CD4-positive, alpha-beta memory T cell (primary cell): ENCODE measurements at regions of chr2 and their contacts with region 1.

Region 1: GRCh38 chr2:230798769-230799399 is 65.9 kb upstream of the ITM2C start:
- DNase-seq: peak; percentile 57 to 71 (median 64)
- H3K4me3 ChIP-seq: no peak overlapping the region
- H3K4me3 Mint-ChIP-seq: peak overlapping the region in 1 of 8 donors; percentile 47
- H3K27ac ChIP-seq: peak overlapping the region; percentile 8
- H3K27ac Mint-ChIP-seq: peak overlapping the region in 3 of 7 donors; percentile 7 to 62 (median 43)
- H3K4me1 ChIP-seq: peaks cover 53% of the 10 kb centered on the region
- H3K4me1 Mint-ChIP-seq: peaks cover 20 to 26% (median 23%) of the 10 kb centered on the region in 4 donors
- H3K27me3 ChIP-seq: no peaks in the 10 kb centered on the region
- H3K27me3 Mint-ChIP-seq: no peaks in the 10 kb centered on the region

Region 2: DNA sequence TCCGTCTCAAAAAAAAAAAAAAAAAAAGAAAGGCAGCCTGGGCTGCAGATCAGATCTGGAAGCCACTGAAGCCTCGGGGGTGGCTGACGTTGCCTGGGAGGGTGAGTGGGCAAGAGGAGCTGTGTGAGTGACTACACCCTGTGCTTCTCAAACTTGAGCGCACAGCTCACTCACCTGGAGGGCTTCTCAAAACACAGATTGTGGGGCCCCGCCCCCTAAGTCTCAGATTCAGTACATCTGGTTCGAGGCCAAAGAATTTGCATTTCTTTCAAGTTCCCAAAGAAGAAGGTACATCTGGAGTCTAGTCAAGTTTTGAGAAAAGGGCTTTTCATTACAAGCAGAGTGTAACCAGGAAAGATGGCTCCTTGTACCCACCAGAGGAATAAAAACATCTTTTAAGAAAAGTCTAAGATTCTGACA is 184.0 kb before region 1 on chr2:
- CTCF ChIA-PET with region 1: interaction called, 7 read pairs
- POLR2A ChIA-PET with region 1: no interaction called
- intact Hi-C with region 1: loop called (anchors 5 kb)
- DNase-seq: no peak
- H3K4me3 ChIP-seq: no peak overlapping the region
- H3K4me3 Mint-ChIP-seq: no peak overlapping the region
- H3K27ac ChIP-seq: no peak overlapping the region
- H3K27ac Mint-ChIP-seq: no peak overlapping the region
- H3K4me1 ChIP-seq: peaks cover 25% of the 10 kb centered on the region
- H3K4me1 Mint-ChIP-seq: peaks cover 9 to 19% (median 16%) of the 10 kb centered on the region in 4 donors
- H3K27me3 ChIP-seq: no peaks in the 10 kb centered on the region
- H3K27me3 Mint-ChIP-seq: no peaks in the 10 kb centered on the region

Region 3: DNA sequence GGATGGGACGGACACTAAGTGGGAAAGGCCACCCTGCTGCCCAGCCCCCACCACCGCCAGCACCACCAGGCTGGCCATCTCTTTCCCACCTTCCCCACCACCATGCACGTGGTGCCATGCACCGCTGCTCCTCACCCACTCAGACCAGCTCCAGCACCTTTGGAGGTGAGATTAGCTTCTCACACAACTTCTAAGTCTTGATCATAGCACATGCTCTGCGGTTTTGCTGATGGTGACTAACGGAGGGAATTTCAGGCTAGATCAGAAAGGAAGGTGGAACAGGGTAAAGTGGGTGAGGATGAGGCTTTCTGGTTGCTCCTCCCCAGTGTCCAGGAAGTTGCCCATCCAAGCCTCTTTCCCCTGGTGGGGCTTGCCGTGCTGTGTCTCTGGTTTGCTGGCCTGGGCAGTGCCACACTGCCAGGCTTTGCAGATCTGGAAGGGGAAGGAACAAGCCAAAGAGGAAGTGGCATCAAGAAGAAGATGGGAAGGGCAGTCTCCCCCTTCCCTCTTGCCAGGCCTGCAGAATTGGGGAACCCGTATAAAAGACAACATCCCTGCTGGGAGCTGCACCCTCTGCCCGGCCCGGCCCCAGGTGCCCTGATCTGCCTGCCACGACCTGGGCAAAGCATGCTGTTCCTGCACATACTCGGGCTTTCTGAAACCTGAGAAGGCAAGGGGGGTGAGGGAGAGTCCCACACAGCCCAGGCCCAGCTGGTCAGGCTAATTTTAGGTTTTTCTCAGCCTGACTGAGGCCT is 130.5 kb before region 1 on chr2:
- CTCF ChIA-PET with region 1: interaction called, 14 read pairs
- POLR2A ChIA-PET with region 1: interaction called, 4 read pairs
- intact Hi-C with region 1: no loop called
- DNase-seq: peak in 1 of 5 donors; percentile 71
- H3K4me3 ChIP-seq: no peak overlapping the region
- H3K4me3 Mint-ChIP-seq: peak overlapping the region in 6 of 8 donors; percentile 25 to 75 (median 43)
- H3K27ac ChIP-seq: no peak overlapping the region
- H3K27ac Mint-ChIP-seq: peak overlapping the region; percentile 33 to 86 (median 72)
- H3K4me1 ChIP-seq: peaks cover 60% of the 10 kb centered on the region
- H3K4me1 Mint-ChIP-seq: peaks cover 46 to 71% (median 62%) of the 10 kb centered on the region in 4 donors
- H3K27me3 ChIP-seq: no peaks in the 10 kb centered on the region
- H3K27me3 Mint-ChIP-seq: no peaks in the 10 kb centered on the region

Region 4: DNA sequence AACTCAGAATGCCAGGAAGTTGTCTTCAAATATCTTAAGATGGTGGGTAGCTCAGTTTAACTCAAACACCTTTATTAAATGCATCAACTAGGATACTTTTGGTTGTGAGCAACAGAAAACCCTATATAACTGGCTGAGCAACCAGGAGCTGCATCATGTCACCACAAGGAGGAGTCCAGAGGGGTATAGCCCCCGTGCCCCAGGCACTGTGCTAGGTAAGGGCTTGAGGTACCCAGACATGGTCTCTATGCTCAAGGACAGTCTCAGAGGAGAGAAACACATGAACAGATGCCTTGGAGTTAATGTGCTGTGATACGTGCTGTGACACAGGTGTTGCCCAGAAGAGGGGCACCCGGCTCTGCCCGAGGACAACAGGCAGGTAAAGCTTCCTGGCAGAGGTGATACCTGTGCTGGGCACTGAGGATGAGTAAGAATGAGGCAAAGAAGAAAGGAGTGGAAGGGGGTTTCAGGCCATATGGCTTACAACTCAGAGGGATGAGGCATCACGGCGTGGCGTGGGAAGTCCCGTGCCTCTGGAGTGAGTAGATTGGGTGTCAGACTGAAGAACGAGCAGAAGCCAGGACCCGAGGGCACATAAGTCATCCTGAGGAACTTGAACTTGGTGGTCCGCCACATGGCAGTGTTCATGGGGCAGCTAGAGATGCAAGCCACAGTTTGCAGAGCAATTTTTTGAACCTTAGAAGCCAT is 118.3 kb before region 1 on chr2:
- CTCF ChIA-PET with region 1: interaction called, 10 read pairs
- POLR2A ChIA-PET with region 1: no interaction called
- intact Hi-C with region 1: no loop called
- DNase-seq: no peak
- H3K4me3 ChIP-seq: no peak overlapping the region
- H3K4me3 Mint-ChIP-seq: no peak overlapping the region
- H3K27ac ChIP-seq: no peak overlapping the region
- H3K27ac Mint-ChIP-seq: peak overlapping the region in 1 of 7 donors; percentile 10
- H3K4me1 ChIP-seq: peaks cover 12% of the 10 kb centered on the region
- H3K4me1 Mint-ChIP-seq: peaks cover 12 to 36% (median 20%) of the 10 kb centered on the region in 4 donors
- H3K27me3 ChIP-seq: no peaks in the 10 kb centered on the region
- H3K27me3 Mint-ChIP-seq: no peaks in the 10 kb centered on the region

Region 5: GRCh38 chr2:230721712-230722111 is 77.2 kb before region 1 on chr2:
- CTCF ChIA-PET with region 1: interaction called, 28 read pairs
- POLR2A ChIA-PET with region 1: interaction called, 8 read pairs
- intact Hi-C with region 1: loop called (anchors 2 kb)
- DNase-seq: peak in 4 of 5 donors; percentile 14 to 38 (median 23)
- H3K4me3 ChIP-seq: no peak overlapping the region
- H3K4me3 Mint-ChIP-seq: peak overlapping the region; percentile 49 to 80 (median 63)
- H3K27ac ChIP-seq: peak overlapping the region; percentile 34
- H3K27ac Mint-ChIP-seq: peak overlapping the region; percentile 14 to 86 (median 78)
- H3K4me1 ChIP-seq: peaks cover 98% of the 10 kb centered on the region
- H3K4me1 Mint-ChIP-seq: peaks cover 64 to 92% (median 80%) of the 10 kb centered on the region in 4 donors
- H3K27me3 ChIP-seq: no peaks in the 10 kb centered on the region
- H3K27me3 Mint-ChIP-seq: no peaks in the 10 kb centered on the region

Region 6: DNA sequence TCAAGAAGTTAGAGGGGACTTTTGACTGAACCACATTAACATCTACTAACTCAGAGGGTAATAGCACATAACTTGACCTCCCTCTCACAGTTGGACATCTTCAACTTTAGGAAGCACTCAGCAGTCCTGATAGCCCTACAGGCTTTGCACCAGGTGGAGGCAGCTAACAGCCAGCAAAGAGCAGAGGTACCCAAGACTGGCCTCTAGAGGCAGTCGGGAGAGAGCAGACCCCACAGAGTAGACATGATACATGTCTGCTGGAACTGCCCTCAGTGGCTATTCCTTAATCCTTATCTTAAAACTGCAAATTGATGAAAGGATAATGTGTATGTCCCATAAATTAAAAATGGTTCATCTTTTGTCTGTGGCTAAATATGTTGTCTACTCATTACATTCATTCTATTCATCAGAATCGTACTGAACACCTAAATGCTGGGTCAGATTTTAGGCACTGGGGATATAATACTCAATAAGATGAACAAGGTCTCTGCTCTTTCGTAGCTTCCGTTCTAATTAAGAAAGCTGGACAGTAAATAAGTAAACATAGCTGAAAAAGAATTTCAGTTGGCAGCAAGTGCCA is 36.5 kb before region 1 on chr2:
- CTCF ChIA-PET with region 1: interaction called, 22 read pairs
- POLR2A ChIA-PET with region 1: no interaction called
- intact Hi-C with region 1: loop called (anchors 2 kb)
- DNase-seq: peak in 2 of 5 donors; percentile 19 to 26
- H3K4me3 ChIP-seq: no peak overlapping the region
- H3K4me3 Mint-ChIP-seq: peak overlapping the region in 1 of 8 donors; percentile 26
- H3K27ac ChIP-seq: no peak overlapping the region
- H3K27ac Mint-ChIP-seq: peak overlapping the region in 4 of 7 donors; percentile 0 to 62 (median 28)
- H3K4me1 ChIP-seq: peaks cover 43% of the 10 kb centered on the region
- H3K4me1 Mint-ChIP-seq: peaks cover 47 to 65% (median 55%) of the 10 kb centered on the region in 4 donors
- H3K27me3 ChIP-seq: no peaks in the 10 kb centered on the region
- H3K27me3 Mint-ChIP-seq: no peaks in the 10 kb centered on the region

Region 7: DNA sequence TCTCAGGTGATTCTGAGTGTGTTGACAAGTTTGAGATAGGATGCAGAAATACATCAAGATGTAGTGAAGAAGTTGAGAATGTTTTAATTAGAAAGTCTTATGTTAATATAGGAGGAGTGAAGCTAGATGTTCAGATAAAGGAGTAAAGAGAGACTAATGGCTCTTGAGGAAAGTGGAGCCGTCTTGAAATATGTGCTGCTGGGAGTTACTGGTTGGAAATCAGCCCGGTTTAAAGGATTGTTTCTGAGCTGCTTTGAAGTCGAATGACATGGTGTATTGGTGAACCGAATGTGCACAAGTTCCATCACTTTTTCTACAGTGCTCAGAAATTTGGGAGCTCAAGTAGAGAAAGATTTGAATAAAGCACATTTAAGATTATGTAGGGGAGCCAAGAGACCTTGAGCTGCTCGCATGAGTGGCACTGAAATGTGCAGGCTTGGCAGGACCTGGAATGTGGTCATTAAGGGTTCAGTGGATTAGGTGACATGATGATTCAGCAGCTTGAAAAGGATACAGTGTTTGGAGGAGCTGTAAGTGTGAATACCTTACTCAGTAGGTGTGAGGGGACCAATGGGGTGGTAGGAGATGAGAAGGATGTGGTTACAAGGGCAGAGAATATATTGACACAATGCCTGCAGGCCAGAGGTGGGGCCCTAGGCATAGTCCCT is 17.6 kb before region 1 on chr2:
- CTCF ChIA-PET with region 1: interaction called, 45 read pairs
- POLR2A ChIA-PET with region 1: interaction called, 142 read pairs
- intact Hi-C with region 1: loop called (anchors 1 kb)
- DNase-seq: peak; percentile 59 to 83 (median 64)
- H3K4me3 ChIP-seq: no peak overlapping the region
- H3K4me3 Mint-ChIP-seq: peak overlapping the region in 6 of 8 donors; percentile 13 to 60 (median 34)
- H3K27ac ChIP-seq: peak overlapping the region; percentile 33
- H3K27ac Mint-ChIP-seq: peak overlapping the region; percentile 14 to 93 (median 64)
- H3K4me1 ChIP-seq: peaks cover 78% of the 10 kb centered on the region
- H3K4me1 Mint-ChIP-seq: peaks cover 60 to 81% (median 72%) of the 10 kb centered on the region in 4 donors
- H3K27me3 ChIP-seq: no peaks in the 10 kb centered on the region
- H3K27me3 Mint-ChIP-seq: no peaks in the 10 kb centered on the region

Region 8: GRCh38 chr2:230840301-230840700 is 41.4 kb after region 1 on chr2:
- CTCF ChIA-PET with region 1: no interaction called
- POLR2A ChIA-PET with region 1: no interaction called
- intact Hi-C with region 1: no loop called
- DNase-seq: no peak
- H3K4me3 ChIP-seq: no peak overlapping the region
- H3K4me3 Mint-ChIP-seq: no peak overlapping the region
- H3K27ac ChIP-seq: no peak overlapping the region
- H3K27ac Mint-ChIP-seq: no peak overlapping the region
- H3K4me1 ChIP-seq: no peaks in the 10 kb centered on the region
- H3K4me1 Mint-ChIP-seq: no peaks in the 10 kb centered on the region
- H3K27me3 ChIP-seq: no peaks in the 10 kb centered on the region
- H3K27me3 Mint-ChIP-seq: peaks cover 3 to 12% of the 10 kb centered on the region in 2 donors

Region 9: DNA sequence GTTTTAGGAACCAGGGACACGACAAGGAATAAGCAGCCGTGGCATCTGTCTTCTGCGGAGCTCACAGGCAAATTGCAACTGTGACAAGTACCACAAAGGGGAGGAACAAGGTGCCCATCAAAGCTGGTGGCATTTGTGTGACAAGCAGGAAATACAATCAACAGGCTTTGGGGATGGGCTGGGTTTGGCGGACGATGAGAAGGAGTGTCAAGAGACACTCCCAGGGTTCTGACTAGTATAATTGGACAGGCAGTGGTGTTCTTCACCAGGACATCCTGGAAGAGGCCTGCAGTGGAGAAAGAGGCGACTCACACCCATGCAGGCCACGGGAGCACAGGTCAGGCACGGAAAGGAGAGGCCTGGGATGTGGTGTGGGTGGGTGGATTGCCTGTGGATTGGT is 182.8 kb after region 1 on chr2:
- CTCF ChIA-PET with region 1: no interaction called
- POLR2A ChIA-PET with region 1: no interaction called
- intact Hi-C with region 1: no loop called
- DNase-seq: peak in 4 of 5 donors; percentile 39 to 53 (median 48)
- H3K4me3 ChIP-seq: no peak overlapping the region
- H3K4me3 Mint-ChIP-seq: peak overlapping the region; percentile 62 to 79 (median 66)
- H3K27ac ChIP-seq: no peak overlapping the region
- H3K27ac Mint-ChIP-seq: peak overlapping the region; percentile 43 to 94 (median 78)
- H3K4me1 ChIP-seq: peaks cover 37% of the 10 kb centered on the region
- H3K4me1 Mint-ChIP-seq: peaks cover 34 to 65% (median 55%) of the 10 kb centered on the region in 4 donors
- H3K27me3 ChIP-seq: no peaks in the 10 kb centered on the region
- H3K27me3 Mint-ChIP-seq: no peaks in the 10 kb centered on the region